GM12878 (cell line): ENCODE measurements at regions of chr2 and their contacts with region 1.

Region 1: DNA sequence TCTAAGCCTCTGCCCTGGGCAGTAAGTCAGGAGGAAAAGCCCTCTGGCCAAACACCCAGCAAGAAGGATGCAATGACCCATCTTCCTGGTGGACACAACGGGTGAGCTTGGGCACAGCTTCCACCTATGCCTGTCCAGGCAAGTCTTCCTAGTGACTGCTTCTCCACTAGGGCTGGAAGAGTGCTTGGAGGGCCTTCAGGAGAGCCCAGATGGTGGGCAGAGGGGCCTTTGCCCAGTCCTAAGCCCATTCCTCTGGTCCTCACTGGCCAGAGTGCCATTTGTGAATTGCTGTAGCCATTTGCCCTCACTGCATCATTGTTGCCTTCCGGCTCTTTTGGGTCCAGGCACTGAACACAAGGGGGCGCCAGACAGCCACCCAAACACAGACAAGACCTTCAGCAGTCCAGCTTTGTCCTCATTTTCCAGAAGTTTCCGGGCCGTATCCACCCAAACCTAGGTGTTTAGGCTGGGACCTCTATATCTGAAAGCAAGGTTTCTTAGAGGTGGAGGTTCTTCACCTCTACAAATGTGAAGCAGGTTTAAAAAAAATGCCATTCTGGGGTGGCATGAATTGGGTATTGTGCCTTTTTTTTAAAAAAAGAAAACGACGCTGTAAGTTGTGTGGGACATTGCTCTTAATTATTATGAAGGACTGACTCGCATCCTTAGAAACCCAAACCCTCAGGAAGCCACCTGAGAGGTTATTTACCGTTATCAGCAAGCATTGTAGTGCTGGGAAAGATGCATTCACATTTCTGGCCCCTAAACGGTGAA is 29.5 kb downstream of the PAX8 start:
- DNase-seq: peak; percentile 23
- ATAC-seq: peak; percentile 95
- H3K4me3 ChIP-seq: no peak overlapping the region
- H3K27ac ChIP-seq: no peak overlapping the region
- H3K4me1 ChIP-seq: peaks cover 8% of the 10 kb centered on the region; the same call in 1 of the 2 replicates
- H3K27me3 ChIP-seq: no peaks in the 10 kb centered on the region
- CTCF ChIP-seq: peak; percentile 90 to 93 (median 92)
- EP300 ChIP-seq: no peak
- POLR2A ChIP-seq: no peak
- RAD21 ChIP-seq: peak; percentile 86

Region 2: DNA sequence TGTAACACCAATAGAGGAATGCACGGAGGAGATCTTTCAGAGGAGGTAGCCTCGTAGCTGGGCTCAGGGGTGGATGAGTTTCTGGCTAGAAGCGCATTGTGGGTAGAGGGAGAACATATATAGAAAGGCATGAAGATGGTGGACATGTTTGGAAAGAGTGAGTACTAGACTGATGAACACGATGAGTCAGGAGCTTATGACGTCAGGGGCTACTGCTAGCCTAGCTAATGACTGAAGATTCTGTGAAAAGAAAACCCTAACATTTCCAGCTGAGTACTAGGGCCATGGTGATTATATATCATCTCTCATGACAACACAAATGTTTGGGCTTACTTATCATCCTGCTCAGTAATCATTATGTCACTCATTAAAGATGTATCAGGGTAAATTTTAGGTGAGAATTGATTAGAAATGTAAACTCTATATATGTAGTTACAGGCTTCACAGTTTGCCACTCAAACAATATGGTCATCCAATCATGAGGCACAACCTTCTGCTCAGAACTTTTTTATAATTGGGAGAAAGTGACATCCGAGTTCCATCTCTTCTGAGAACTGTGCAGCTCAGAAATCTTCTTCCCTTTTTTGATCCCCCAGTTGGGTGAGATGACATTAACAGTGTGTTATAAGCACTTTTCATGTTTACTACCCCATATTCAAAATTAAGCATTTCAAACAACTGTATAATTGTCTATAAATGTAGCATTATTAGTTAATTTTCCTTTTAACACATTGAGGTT is 144.0 kb before region 1 on chr2:
- CTCF ChIA-PET with region 1: no interaction called
- POLR2A ChIA-PET with region 1: no interaction called
- RAD21 ChIA-PET with region 1: no interaction called
- SMC1A ChIA-PET with region 1: no interaction called
- in situ Hi-C with region 1: no loop called
- intact Hi-C with region 1: no loop called
- DNase-seq: no peak
- ATAC-seq: no peak
- H3K4me3 ChIP-seq: no peak overlapping the region
- H3K27ac ChIP-seq: no peak overlapping the region
- H3K4me1 ChIP-seq: no peaks in the 10 kb centered on the region
- H3K27me3 ChIP-seq: no peaks in the 10 kb centered on the region
- CTCF ChIP-seq: no peak
- EP300 ChIP-seq: no peak
- POLR2A ChIP-seq: no peak
- RAD21 ChIP-seq: no peak

Region 3: DNA sequence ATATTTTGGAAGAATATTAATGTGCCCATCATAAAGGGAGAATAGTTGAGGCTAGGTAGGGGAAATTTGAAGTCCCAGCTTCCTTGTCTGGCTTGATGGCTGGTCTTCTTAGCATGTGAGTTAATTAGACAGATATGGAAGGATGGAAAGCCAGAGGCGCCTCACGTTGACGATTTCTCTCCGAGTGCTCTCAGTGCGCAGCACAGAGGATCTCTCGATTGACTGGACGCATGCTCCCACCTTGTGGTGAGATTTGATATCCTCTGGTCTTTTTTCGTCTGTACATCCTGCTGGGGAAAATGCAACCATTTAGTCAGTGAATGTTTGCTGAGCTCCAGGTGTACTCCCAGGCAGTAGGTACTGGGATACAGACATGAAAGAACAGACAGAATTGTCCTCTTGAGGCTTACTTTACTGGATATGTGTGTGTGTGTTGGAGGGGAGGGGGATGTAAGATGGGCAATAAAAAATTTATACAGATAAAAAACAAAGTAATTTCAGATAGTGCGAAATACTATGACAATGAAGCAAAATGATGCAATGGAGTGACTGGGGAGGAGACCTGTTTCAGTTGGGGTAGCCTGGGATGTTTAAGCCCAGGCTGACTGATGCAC is 121.4 kb after region 1 on chr2:
- CTCF ChIA-PET with region 1: interaction called, 13 read pairs
- POLR2A ChIA-PET with region 1: no interaction called
- RAD21 ChIA-PET with region 1: no interaction called
- SMC1A ChIA-PET with region 1: interaction called, 4 read pairs
- in situ Hi-C with region 1: loop called (anchors 5 kb)
- intact Hi-C with region 1: loop called (anchors 1 kb)
- DNase-seq: peak; percentile 23
- ATAC-seq: peak; percentile 96
- H3K4me3 ChIP-seq: no peak overlapping the region
- H3K27ac ChIP-seq: no peak overlapping the region
- H3K4me1 ChIP-seq: no peaks in the 10 kb centered on the region
- H3K27me3 ChIP-seq: no peaks in the 10 kb centered on the region; a peak in 1 of 4 replicates
- CTCF ChIP-seq: peak; percentile 44 to 61 (median 53); a peak in 5 of 6 replicates
- EP300 ChIP-seq: no peak
- POLR2A ChIP-seq: no peak
- RAD21 ChIP-seq: peak; percentile 73

Region 4: GRCh38 chr2:113376913-113377445 is 127.8 kb after region 1 on chr2:
- CTCF ChIA-PET with region 1: interaction called, 13 read pairs
- POLR2A ChIA-PET with region 1: no interaction called
- RAD21 ChIA-PET with region 1: interaction called, 3 read pairs
- SMC1A ChIA-PET with region 1: no interaction called
- in situ Hi-C with region 1: loop called (anchors 5 kb)
- intact Hi-C with region 1: no loop called
- DNase-seq: peak; percentile 34
- ATAC-seq: peak; percentile 97
- H3K4me3 ChIP-seq: no peak overlapping the region
- H3K27ac ChIP-seq: peak overlapping the region; percentile 26; the same call in 1 of the 2 replicates
- H3K4me1 ChIP-seq: peaks cover 4% of the 10 kb centered on the region
- H3K27me3 ChIP-seq: no peaks in the 10 kb centered on the region
- CTCF ChIP-seq: no peak
- EP300 ChIP-seq: no peak
- POLR2A ChIP-seq: no peak
- RAD21 ChIP-seq: no peak